HEK293 (cell line): ENCODE measurements at regions of chr6 and their contacts with region 1.

Region 1: GRCh38 chr6:33744001-33744848 is 2.5 kb downstream of the IP6K3 start:
- H3K4me3 ChIP-seq: no peak overlapping the region
- H3K27ac ChIP-seq: peak overlapping the region; percentile 67; the same call in 1 of the 2 replicates
- H3K4me1 ChIP-seq: peaks cover 21% of the 10 kb centered on the region
- CTCF ChIP-seq: peak; percentile 98

Region 2: DNA sequence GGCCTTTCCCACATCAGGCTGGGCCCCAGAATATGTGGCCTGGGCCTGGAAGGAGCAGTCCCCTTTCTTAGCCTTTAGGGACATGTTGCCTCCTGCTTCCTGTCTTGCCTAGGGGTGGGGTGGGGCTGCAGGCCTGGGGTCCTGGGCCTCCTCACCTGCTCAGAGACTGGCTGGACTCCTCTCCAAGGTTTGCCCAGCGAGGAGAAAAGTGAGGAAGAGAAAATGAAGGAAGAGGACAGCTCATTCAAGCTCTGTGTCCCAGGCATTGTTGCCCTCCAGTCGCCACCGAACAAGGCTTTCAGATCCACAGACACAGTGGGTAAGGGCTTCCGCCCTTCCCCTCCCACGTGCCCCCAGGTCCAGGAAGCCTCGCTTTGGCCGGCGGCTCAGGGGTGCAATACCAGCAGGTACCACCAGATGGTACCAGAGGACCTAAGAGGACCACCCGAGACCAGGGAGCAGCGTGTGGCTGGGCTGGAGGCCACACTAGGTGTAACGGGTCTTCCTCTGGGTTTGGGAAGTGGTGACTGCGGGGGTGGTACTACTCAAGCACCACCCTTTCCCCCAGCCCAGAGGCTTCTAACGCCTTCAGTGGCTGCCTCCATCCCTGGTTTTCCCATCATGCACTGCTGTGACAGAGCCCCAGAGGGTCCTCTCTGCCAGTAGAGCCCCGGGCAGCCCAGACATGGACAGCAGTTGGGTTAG is 158.7 kb before region 1 on chr6:
- CTCF ChIA-PET with region 1: interaction called, 12 read pairs
- POLR2A ChIA-PET with region 1: no interaction called
- H3K4me3 ChIP-seq: no peak overlapping the region
- H3K27ac ChIP-seq: no peak overlapping the region; the same call in 1 of the 2 replicates
- H3K4me1 ChIP-seq: no peaks in the 10 kb centered on the region; the same call in 1 of the 2 replicates
- CTCF ChIP-seq: peak; percentile 91

Region 3: GRCh38 chr6:33711140-33712129 is 32.8 kb before region 1 on chr6 and contains the start of gene UQCC2:
- CTCF ChIA-PET with region 1: interaction called, 15 read pairs
- POLR2A ChIA-PET with region 1: interaction called, 3 read pairs
- H3K4me3 ChIP-seq: peak within 1 kb of the TSS; percentile 89
- H3K27ac ChIP-seq: peak within 1 kb of the TSS; percentile 97
- H3K4me1 ChIP-seq: peaks cover 7% of the 10 kb centered on the region; the same call in 1 of the 2 replicates
- CTCF ChIP-seq: peak; percentile 81

Region 4: GRCh38 chr6:33723371-33724085 is 20.7 kb before region 1 on chr6:
- CTCF ChIA-PET with region 1: interaction called, 27 read pairs
- POLR2A ChIA-PET with region 1: no interaction called
- H3K4me3 ChIP-seq: no peak overlapping the region
- H3K27ac ChIP-seq: no peak overlapping the region
- H3K4me1 ChIP-seq: no peaks in the 10 kb centered on the region
- CTCF ChIP-seq: no peak

Region 5: DNA sequence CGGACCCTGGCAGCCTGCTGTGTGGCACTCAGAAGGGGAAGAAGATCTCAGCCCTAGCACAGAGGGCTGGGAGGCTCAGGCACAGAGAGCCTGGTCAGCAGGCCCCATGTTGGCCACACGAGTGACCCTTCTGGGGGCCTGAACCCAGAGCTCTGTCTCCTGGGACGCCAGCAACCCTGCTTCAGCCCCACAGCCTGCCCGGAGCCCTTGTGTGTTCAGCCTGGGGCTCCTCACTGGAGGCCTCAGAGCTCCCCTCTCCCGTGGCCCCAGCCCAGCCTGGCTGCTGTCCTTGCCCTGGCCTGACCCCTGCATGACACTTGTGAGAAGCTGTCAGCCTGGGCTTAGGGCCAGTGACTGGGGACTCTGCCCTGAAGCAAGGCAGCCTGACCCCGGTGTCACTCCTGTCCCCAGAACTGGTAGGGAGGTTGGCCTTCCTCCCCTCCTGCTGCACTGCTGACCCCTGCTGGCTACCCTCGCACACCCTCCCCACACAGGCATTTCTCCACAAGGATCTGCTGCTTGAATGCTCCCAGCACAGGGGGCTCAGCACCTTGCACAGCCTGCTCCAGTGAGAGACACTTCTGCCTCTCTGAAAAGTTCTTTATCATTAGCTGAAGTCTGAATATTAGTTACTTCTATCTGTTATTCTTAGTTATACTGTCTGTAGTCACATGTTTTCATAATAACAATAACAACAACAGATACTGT is 17.9 kb after region 1 on chr6:
- CTCF ChIA-PET with region 1: interaction called, 193 read pairs
- POLR2A ChIA-PET with region 1: no interaction called
- H3K4me3 ChIP-seq: no peak overlapping the region
- H3K27ac ChIP-seq: peak overlapping the region; percentile 37; the same call in 1 of the 2 replicates
- H3K4me1 ChIP-seq: peaks cover 16% of the 10 kb centered on the region
- CTCF ChIP-seq: peak; percentile 95

Region 6: GRCh38 chr6:34027445-34027936 is 283.3 kb after region 1 on chr6:
- CTCF ChIA-PET with region 1: interaction called, 26 read pairs
- POLR2A ChIA-PET with region 1: no interaction called
- H3K4me3 ChIP-seq: no peak overlapping the region
- H3K27ac ChIP-seq: no peak overlapping the region
- H3K4me1 ChIP-seq: no peaks in the 10 kb centered on the region
- CTCF ChIP-seq: peak; percentile 54